Activated CD4-positive, alpha-beta memory T cell treated with anti-CD3 and anti-CD28 coated beads, Interleukin-2, amount 10 ng/mL, durations not matched to agents 7 days and 5 days (primary cell): ENCODE measurements at regions of chr15 and their contacts with region 1.

Region 1: GRCh38 chr15:78872972-78873792 is 492 bp downstream of the MORF4L1 start:
- DNase-seq: peak; percentile 90
- H3K4me3 Mint-ChIP-seq: peak overlapping the region; percentile 94
- H3K27ac Mint-ChIP-seq: peak overlapping the region; percentile 100
- H3K4me1 Mint-ChIP-seq: peaks cover 43% of the 10 kb centered on the region
- H3K27me3 Mint-ChIP-seq: no peaks in the 10 kb centered on the region

Region 2: DNA sequence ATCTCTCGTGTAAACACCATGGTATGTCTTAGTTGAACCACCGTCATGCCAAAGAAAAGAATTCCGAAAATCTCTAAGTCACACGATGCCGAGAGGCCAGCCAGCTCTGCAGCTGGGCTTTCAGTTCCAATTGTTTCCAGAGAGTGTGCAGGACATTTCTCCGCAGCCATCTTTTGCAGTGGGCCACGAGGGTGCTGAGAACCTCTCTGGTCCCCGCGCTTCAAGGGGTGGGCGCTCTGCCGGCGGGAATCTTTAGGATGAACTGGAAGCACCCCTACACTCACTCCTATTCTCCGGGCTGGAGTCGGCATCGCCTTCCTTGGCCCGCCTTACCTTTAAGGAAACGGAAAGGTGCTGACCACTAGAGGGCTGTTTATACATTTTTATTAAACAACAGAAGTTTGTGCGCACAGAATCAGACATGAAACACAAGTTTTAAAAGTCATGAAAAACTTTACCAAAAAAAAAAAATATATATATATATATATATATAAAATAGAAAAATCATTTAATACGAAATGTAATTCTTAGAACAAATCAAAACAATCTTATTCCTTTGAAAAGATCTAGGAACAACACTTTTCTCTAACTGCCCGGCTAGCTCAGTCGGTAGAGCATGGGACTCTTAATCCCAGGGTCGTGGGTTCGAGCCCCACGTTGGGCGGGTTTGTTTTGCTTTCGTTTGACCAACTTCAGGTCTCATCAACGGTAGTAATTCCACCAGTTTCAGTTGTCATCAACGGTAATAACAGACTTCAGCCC is 13.0 kb before region 1 on chr15:
- CTCF ChIA-PET with region 1: interaction called, 7 read pairs
- POLR2A ChIA-PET with region 1: interaction called, 20 read pairs
- DNase-seq: peak; percentile 80
- H3K4me3 Mint-ChIP-seq: peak overlapping the region; percentile 66
- H3K27ac Mint-ChIP-seq: peak overlapping the region; percentile 69
- H3K4me1 Mint-ChIP-seq: peaks cover 7% of the 10 kb centered on the region
- H3K27me3 Mint-ChIP-seq: no peaks in the 10 kb centered on the region

Region 3: GRCh38 chr15:78944669-78945407 is 71.7 kb after region 1 on chr15 and contains the start of gene CTSH:
- CTCF ChIA-PET with region 1: no interaction called
- POLR2A ChIA-PET with region 1: interaction called, 12 read pairs
- DNase-seq: peak; percentile 84
- H3K4me3 Mint-ChIP-seq: peak within 1 kb of the TSS; percentile 83
- H3K27ac Mint-ChIP-seq: peak within 1 kb of the TSS; percentile 75
- H3K4me1 Mint-ChIP-seq: peaks cover 32% of the 10 kb centered on the region
- H3K27me3 Mint-ChIP-seq: peaks cover 3% of the 10 kb centered on the region
- total RNA-seq, gene CTSH: 257 to 273 TPM

Region 4: DNA sequence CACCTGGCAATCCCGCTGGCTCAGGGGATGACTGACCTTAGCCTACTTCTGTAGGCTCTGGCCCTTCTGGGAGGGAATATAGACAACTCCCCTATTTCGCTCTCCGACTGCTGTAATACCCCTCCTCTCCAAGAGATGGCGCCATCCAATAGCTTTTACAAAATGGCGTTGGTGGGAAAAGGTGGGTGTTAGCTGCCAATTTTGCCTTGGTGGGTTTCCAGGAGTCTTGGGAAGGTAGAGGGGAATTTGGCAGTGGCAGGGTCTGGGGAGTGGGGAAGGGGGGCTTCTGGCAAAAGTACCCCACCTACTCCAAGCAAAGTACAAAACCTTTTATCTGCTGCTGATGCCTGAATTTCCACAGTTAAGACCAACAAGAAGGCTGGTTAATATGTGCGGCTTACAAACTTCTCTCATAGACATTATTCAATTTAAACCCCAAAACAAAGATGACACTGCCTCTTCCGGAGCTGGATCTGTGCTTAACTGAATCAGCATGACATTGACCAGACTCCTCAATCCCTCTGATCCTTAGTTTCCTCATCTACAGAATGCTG is 155.3 kb after region 1 on chr15:
- CTCF ChIA-PET with region 1: no interaction called
- POLR2A ChIA-PET with region 1: no interaction called
- DNase-seq: peak; percentile 49
- H3K4me3 Mint-ChIP-seq: no peak overlapping the region
- H3K27ac Mint-ChIP-seq: no peak overlapping the region
- H3K4me1 Mint-ChIP-seq: peaks cover 2% of the 10 kb centered on the region
- H3K27me3 Mint-ChIP-seq: peaks cover 1% of the 10 kb centered on the region